K562 (cell line): ENCODE measurements at regions of chr10 and their contacts with region 1.

Region 1: DNA sequence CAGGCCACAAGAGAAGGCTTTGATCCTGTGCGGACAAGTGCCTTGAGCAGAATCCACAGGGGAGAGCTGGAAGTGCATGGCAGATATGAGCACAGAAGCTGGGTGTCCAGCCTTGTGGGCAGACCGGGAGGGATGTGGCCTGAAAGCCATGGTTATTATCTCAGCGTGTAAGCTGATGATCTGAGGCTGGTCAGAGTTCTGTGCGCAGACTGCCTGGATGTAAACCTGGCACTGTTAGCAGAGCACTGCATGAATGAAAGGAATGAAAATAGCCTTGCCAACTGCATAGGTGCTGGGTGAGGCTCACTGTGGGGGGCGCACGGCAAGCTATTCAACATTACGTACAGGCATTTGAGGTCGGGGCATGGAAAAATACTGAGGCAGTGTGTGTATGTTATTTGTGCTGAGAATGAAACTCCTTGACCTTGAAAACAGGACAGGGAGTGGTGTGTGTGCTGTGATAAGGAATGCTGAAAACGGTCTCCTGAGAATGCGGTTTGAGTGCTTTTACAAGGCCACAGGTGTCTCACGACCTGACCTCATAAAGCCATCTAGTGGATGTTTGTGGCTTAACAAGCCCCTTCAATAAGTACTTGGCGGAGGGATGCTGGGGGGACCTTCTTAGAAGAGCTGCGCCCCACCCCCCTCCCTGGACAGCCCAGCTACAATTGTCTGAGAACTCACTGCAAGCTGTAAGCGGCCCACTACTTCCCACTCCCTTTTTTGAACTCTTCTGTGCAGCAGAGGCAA is 18.7 kb downstream of the AKR1C1 start:
- DNase-seq: peak; percentile 62 to 93 (median 64)
- ATAC-seq: peak; percentile 89
- H3K4me3 ChIP-seq: no peak overlapping the region
- H3K27ac ChIP-seq: peak overlapping the region; percentile 82
- H3K4me1 ChIP-seq: peaks cover 18 to 20% of the 10 kb centered on the region in 2 experiments; a peak in 4 of 5 replicates
- H3K27me3 ChIP-seq: no peaks in the 10 kb centered on the region
- CTCF ChIP-seq: peak; percentile 78 to 79 (median 78)
- EP300 ChIP-seq: peak; percentile 92
- POLR2A ChIP-seq: peak; percentile 63; the same call in 1 of the 2 replicates
- RAD21 ChIP-seq: peak; percentile 58 to 78

Region 2: DNA sequence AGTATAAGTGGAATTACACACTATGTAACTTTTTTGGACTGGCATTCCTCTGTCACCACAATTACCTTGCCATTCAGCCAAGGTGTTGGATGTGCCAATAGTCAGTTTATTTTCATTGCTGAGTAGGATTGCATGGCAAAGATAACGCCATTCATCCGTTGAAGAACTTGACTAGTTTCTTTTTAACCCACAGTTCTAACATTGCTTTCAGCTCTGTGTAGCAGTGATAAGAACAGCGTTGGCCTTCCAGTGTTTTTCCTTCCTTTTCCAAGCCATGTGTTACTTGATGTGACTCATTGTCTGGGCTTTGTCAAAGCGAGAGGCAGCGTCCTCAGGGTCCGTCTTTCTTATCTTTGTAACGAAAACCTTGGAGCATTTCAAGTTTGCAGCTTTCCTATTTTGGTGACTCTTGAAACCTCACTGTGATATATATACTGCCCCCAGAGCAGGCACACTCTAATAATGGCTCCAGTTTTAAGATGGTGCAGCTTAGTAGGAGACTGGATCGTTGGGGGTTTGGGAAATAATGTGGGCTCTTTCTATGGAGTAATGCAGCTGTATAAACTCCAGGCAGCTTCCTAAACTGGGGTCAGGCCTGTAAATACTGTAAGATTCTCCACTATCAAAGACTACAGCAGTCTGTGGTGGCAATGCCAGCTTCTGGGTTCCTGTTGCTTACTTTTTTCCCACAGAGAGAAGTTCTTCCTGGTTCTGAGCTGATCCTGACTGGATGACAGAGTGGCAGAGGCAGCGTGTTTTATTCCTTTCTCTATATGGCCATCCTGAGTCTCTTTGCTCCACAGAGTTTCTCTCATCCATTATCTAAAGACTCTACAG is 114.2 kb before region 1 on chr10:
- CTCF ChIA-PET with region 1: no interaction called
- POLR2A ChIA-PET with region 1: interaction called, 4 read pairs
- in situ Hi-C with region 1: no loop called
- intact Hi-C with region 1: loop called (anchors 5 kb)
- DNase-seq: peak; percentile 79 to 96 (median 82)
- ATAC-seq: peak; percentile 87
- H3K4me3 ChIP-seq: peak overlapping the region; percentile 5; the same call in 1 of the 2 replicates
- H3K27ac ChIP-seq: peak overlapping the region; percentile 95
- H3K4me1 ChIP-seq: peaks cover 13 to 45% of the 10 kb centered on the region in 2 experiments; a peak in 4 of 5 replicates
- H3K27me3 ChIP-seq: no peaks in the 10 kb centered on the region
- CTCF ChIP-seq: no peak
- EP300 ChIP-seq: peak; percentile 99
- POLR2A ChIP-seq: peak; percentile 55
- RAD21 ChIP-seq: peak in 1 of 2 experiments; percentile 37; a peak in 1 of 4 replicates

Region 3: DNA sequence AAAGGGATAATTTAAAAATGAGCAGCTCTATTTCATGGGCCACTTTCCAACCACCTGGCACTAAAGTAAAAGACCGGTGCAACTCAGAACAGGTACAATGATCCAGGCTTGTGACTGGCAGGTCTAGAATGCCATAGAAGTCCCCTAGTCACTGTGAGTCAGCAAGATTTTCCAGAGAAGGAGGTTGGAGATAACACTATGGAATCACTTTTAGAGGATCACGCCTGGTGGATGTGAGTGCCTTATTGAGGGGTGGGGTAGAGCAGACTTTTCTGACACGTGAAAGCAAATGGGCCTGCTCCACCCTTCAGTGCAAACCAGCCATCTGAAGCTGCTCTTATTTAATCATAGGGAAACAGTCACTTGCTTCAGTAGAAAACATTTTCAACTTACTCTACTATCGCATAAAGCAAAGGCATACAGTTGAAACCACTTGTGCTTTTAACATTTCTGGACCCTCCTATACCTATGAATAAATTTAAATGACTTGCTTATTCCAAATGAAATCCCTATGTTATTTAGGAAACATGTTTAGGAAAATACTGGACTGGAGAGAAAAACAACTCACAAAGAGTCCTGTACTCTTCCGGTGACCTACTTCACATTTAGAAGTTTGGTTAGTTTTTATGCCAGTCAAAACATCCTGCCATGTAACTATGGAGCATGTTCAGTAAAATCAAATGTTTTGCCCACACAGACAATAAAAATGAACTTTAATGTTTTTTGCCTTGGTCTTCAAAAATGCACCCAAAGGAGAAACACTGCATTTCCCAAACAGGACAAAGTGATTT is 40.2 kb before region 1 on chr10:
- CTCF ChIA-PET with region 1: no interaction called
- POLR2A ChIA-PET with region 1: no interaction called
- in situ Hi-C with region 1: no loop called
- intact Hi-C with region 1: loop called (anchors 1 kb)
- DNase-seq: peak; percentile 72 to 93 (median 78)
- ATAC-seq: peak; percentile 93
- H3K4me3 ChIP-seq: no peak overlapping the region
- H3K27ac ChIP-seq: peak overlapping the region; percentile 74
- H3K4me1 ChIP-seq: peaks cover 0 to 27% of the 10 kb centered on the region in 2 experiments; a peak in 4 of 5 replicates
- H3K27me3 ChIP-seq: no peaks in the 10 kb centered on the region
- CTCF ChIP-seq: no peak
- EP300 ChIP-seq: peak; percentile 91
- POLR2A ChIP-seq: no peak
- RAD21 ChIP-seq: peak in 1 of 2 experiments; percentile 35; a peak in 1 of 4 replicates

Region 4: DNA sequence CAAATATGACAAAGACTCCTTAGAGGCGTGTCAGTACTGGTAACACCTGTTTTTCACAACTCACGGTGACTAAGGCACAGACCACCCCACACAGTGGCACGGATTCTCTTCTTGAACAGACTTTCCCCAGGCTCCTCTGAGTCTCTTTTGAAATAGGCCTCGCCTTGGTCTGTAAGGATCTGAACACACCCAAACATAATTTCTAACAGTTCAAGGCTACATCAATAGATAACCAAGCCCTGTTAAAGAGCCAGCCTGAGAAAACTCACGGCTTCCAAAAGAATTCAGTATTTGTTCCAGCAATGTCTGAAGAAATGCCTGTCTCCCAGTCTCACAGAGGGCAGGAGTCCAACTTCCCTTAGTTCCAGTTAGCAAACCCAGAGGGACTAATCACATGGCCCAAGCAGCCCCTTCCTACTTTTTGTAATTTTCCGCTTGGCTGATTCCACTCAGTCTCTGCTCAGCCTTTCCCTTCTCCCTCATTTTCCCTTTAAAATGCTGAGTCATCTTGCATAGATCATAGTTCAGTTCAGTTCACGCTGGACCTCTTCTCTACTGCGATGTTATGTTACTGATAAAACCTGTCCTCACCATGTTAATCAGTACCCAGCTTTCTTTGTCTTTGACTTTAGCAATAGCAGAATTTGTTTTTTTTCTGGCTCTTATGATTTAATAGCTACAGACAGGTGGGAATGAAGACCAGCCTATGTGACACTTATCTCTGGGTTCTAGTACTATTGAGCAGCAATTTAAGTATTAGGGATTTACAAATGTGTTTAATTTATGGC is 89.7 kb after region 1 on chr10:
- CTCF ChIA-PET with region 1: no interaction called
- POLR2A ChIA-PET with region 1: no interaction called
- in situ Hi-C with region 1: no loop called
- intact Hi-C with region 1: loop called (anchors 5 kb)
- DNase-seq: peak; percentile 57 to 90 (median 70)
- ATAC-seq: peak; percentile 94
- H3K4me3 ChIP-seq: no peak overlapping the region
- H3K27ac ChIP-seq: peak overlapping the region; percentile 94
- H3K4me1 ChIP-seq: peaks cover 4 to 40% of the 10 kb centered on the region in 2 experiments; a peak in 4 of 5 replicates
- H3K27me3 ChIP-seq: no peaks in the 10 kb centered on the region
- CTCF ChIP-seq: no peak
- EP300 ChIP-seq: peak; percentile 94
- POLR2A ChIP-seq: no peak; the same call in 1 of the 2 replicates
- RAD21 ChIP-seq: peak in 1 of 2 experiments; percentile 26; a peak in 1 of 4 replicates

Region 5: DNA sequence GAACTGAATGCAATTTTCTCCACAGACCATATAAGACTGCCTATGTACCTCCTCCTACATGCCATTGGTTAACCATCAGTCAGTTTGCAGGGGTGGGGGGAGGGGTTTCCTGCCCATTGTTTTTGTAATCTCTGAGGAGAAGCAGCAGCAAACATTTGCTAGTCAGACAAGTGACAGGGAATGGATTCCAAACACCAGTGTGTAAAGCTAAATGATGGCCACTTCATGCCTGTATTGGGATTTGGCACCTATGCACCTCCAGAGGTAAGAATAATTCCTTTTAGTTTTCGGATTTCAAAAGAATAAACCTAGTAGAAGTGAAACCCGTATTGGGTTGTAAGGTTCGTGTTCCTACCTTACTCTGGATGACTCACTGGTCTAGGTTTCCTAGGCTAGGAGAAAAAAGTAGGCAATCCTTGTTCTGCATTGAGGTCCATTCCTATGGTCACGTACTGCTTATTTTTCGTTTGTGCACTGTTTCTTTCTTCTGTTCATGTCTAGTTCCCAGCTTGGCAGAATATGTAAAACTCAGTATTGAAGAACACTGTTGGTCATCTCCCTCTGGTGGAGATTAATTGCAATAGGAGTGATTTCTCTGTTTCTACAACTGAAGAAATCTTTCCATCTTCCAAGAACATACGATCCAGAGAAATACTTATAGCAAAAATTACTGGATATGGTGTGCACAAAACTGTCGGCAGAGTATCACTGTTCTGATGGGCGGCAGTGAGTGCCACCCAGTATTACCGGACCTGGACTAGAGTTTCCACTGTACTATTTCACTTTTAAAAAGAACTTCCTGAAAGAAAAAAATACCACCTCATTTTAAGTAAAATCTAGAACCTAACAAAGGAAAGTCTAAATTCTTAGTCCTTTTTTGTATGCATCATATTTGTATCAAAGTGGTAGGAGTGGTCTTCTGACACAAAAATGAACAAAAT is 112.6 kb after region 1 on chr10 and contains the start of gene AKR1C3:
- CTCF ChIA-PET with region 1: interaction called, 3 read pairs
- POLR2A ChIA-PET with region 1: interaction called, 3 read pairs
- in situ Hi-C with region 1: no loop called
- intact Hi-C with region 1: loop called (anchors 1 kb)
- DNase-seq: peak; percentile 27 to 62 (median 40)
- ATAC-seq: peak; percentile 89
- H3K4me3 ChIP-seq: peak within 1 kb of the TSS; percentile 0; the same call in 1 of the 2 replicates
- H3K27ac ChIP-seq: peak within 1 kb of the TSS; percentile 42; the same call in 2 of the 3 replicates
- H3K4me1 ChIP-seq: no peaks in the 10 kb centered on the region; a peak in 1 of 5 replicates
- H3K27me3 ChIP-seq: no peaks in the 10 kb centered on the region
- CTCF ChIP-seq: peak; percentile 50 to 65 (median 57); a peak in 5 of 6 replicates
- EP300 ChIP-seq: no peak
- POLR2A ChIP-seq: peak; percentile 43; the same call in 1 of the 2 replicates
- RAD21 ChIP-seq: peak; percentile 42 to 79; a peak in 3 of 4 replicates
- polyA plus RNA-seq, gene AKR1C3: 18.8 to 20.4 TPM

Region 6: DNA sequence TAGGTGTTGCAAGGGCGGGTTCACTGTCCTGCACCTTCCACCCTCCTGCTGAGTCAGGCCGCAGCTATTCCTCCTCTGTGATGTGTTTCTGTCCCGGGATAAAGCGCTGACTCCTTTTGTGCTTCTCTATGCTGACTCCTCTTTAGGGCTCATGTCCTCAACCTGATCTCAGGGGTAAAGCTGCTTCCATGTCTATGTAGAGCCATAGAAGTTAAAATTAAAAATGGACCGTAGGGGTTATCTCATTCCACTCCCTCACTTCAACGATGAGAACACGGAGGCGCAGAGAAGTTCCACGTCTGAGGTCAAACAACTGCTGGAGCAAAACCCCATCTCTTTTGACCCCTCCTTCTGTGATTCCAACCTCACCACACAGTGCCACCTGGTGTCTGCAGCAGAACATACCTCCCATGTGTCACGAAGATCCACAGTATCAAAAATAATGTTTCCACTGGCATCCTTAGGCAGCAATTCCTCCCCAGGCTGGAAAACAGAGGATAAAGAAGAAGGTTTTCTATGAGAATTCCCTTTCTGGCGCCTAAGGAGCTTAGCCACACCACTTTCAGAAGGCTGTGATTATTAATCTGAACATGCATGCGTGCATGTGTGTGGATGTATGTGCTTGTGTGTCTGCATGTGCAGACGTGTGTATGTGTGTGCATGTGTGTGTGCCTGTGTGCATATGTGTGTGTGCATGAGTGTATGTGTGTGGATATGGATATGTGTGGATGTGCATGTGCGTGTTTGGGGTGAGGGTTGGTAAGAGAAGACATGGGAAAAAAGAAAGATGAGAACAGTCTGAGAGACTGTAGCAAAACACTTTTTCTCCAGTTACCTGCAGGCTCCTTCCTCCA is 301.6 kb after region 1 on chr10:
- CTCF ChIA-PET with region 1: interaction called, 3 read pairs
- POLR2A ChIA-PET with region 1: no interaction called
- in situ Hi-C with region 1: loop called (anchors 5 kb)
- intact Hi-C with region 1: loop called (anchors 5 kb)
- DNase-seq: peak; percentile 47 to 81 (median 62)
- ATAC-seq: peak; percentile 95
- H3K4me3 ChIP-seq: no peak overlapping the region
- H3K27ac ChIP-seq: peak overlapping the region; percentile 89
- H3K4me1 ChIP-seq: peaks cover 2 to 17% of the 10 kb centered on the region in 2 experiments; a peak in 4 of 5 replicates
- H3K27me3 ChIP-seq: no peaks in the 10 kb centered on the region
- CTCF ChIP-seq: peak; percentile 79 to 83 (median 80)
- EP300 ChIP-seq: no peak
- POLR2A ChIP-seq: no peak
- RAD21 ChIP-seq: peak; percentile 66 to 84

Region 7: GRCh38 chr10:5434017-5434753 is 452.3 kb after region 1 on chr10:
- CTCF ChIA-PET with region 1: no interaction called
- POLR2A ChIA-PET with region 1: no interaction called
- in situ Hi-C with region 1: no loop called
- intact Hi-C with region 1: loop called (anchors 10 kb)
- DNase-seq: peak; percentile 27 to 60 (median 32)
- ATAC-seq: peak; percentile 92
- H3K4me3 ChIP-seq: no peak overlapping the region
- H3K27ac ChIP-seq: peak overlapping the region; percentile 31; the same call in 1 of the 3 replicates
- H3K4me1 ChIP-seq: peaks cover 0 to 7% of the 10 kb centered on the region in 2 experiments; a peak in 2 of 5 replicates
- H3K27me3 ChIP-seq: no peaks in the 10 kb centered on the region
- CTCF ChIP-seq: peak; percentile 51 to 78 (median 69); a peak in 5 of 6 replicates
- EP300 ChIP-seq: no peak
- POLR2A ChIP-seq: no peak
- RAD21 ChIP-seq: peak; percentile 65 to 86